ENCODE measurements at regions of chr18 and their contacts with region 1.

Region 1: GRCh38 chr18:74040459-74041332 is 106.9 kb downstream of the FBXO15 start:
- H3K4me3 Mint-ChIP-seq: no peak overlapping the region
- H3K27ac Mint-ChIP-seq: no peak overlapping the region
- H3K4me1 Mint-ChIP-seq: no peaks in the 10 kb centered on the region
- H3K27me3 Mint-ChIP-seq: no peaks in the 10 kb centered on the region

Region 2: GRCh38 chr18:74116633-74117554 is 76.2 kb after region 1 on chr18:
- intact Hi-C with region 1: loop called (anchors 5 kb)
- H3K4me3 Mint-ChIP-seq: no peak overlapping the region
- H3K27ac Mint-ChIP-seq: no peak overlapping the region
- H3K4me1 Mint-ChIP-seq: no peaks in the 10 kb centered on the region
- H3K27me3 Mint-ChIP-seq: peaks cover 5% of the 10 kb centered on the region

Region 3: DNA sequence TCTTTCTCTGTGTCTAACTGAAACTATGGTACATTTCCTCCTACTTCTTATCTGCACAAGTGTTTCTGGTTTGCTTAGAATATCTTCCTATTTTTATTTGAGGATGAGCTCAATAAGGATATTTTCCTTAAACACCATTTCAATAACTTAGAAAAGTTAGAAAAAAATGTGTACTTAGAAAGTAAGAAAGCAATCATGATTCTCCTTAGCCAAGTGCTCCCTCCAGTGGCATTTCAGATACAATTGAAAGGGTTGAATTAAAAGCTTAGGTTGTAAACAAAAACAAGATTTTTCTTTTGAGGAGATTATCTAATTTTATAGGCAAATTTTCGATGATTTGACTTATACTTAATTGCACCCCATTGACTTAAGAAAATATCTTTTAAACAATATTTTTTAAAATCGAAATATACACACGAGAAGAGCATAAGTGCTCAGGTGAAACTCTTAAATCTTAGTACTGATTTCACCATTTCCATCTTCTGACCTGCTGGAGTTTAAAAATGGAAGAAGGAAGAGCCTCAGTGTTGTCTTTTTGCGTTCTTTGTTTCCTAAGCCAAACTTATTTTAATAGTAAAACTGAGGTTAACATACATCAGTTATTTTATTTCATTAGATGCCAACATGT is 301.8 kb after region 1 on chr18:
- intact Hi-C with region 1: loop called (anchors 2 kb)
- H3K4me3 Mint-ChIP-seq: no peak overlapping the region
- H3K27ac Mint-ChIP-seq: no peak overlapping the region
- H3K4me1 Mint-ChIP-seq: no peaks in the 10 kb centered on the region
- H3K27me3 Mint-ChIP-seq: peaks cover 4% of the 10 kb centered on the region